ENCODE measurements at regions of chr19 and their contacts with region 1.

Region 1: DNA sequence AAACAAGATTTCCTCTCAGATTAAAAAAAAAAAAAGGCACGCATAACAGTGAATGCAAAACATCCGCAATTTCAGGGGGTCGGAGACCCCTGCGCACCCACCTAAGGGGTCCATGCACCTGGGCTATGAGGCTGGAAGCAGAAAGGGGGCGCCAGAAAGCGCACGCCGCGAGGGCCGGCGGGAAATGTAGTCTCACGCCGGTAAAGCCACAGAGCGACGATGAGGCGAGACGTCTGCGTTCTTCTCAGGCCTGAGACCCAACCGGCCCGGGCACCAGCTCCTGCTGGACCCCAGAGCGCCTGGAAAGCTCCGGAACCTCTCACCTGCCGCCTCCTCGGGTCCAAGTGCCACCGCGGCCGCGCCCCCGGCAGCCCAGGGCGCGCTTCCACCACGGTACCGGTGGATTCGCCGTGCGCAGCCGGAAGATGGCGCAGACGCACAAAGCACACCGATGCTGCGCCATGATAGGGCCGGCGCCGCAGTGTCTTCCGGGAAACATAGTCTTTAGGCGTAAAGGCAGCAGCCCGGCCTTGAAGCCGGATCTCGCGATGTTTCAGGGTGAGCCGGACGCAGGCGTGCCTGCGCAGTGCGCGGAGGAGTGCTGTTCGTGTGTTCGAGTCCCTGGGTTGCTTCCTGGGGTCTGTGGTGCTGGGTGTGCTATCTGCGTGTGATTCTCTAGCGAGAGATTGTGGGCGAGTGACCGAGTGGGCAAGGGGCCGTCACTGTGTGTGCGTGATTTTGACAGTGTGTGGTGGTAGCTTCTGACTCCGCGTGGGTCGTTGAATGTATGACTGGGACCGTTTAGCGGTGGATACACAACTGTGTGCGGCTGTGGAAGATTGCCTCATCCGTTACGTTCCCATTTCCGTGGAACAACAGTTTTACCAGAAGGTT is at the start of gene ZNF582:
- DNase-seq: peak; percentile 97 to 99 (median 98)
- ATAC-seq: peak; percentile 99 to 100 (median 99)
- H3K4me3 ChIP-seq: peak within 1 kb of the TSS; percentile 63 to 88 (median 74)
- H3K27ac ChIP-seq: peak within 1 kb of the TSS; percentile 76 to 99 (median 96)
- H3K4me1 ChIP-seq: peaks cover 0 to 19% (median 8%) of the 10 kb centered on the region in 12 donors
- H3K27me3 ChIP-seq: no peaks in the 10 kb centered on the region
- CTCF ChIP-seq: peak; percentile 68 to 97 (median 84)
- POLR2A ChIP-seq: peak in 1 of 2 donors; percentile 60
- total RNA-seq, gene ZNF582: 3.5 to 6.2 (median 4.7) TPM

Region 2: DNA sequence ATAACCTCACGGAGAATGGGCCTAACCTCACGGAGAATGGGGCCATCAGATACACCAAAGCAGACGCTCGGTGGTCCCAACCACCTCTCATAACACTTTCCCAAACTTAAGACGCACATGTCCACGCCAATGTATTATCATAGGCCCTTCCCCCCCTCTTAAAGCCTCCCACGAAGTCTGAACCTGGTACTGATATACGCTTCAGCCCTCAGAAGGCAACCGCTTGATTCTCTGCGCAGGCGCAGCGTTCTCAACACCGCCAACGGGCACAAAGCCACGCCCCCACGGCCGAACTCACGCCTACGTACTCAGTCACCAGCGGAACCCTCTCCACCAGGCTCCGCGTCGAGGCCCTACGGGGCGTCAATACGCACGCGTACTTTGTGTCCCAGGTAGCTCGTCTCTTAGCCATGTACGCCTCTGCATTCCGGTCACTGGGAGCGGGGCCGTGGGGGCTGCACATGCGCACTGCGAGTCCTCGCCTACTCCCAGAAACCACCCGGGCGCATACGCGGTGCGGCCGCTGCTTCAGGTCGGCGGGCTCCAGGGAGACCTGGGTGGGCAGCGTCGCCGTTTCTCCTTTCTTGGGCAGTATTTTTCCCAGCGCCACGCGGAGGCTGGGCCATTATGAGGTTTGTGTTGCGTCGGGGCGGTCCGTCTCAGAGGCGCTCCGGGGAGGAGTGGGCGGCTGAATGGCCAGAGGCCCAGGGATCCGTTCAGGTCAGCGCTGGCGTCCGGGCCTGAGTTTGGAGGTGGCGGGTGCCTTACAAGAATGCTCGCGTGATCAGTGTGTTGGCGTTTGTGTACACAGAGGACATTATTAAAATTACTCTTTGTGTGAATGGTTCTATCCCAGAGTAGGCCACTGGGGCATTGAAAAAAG is 25.3 kb before region 1 on chr19:
- intact Hi-C with region 1: loop called in 1 of 10 experiments (anchors 1 kb)
- DNase-seq: peak; percentile 93 to 98 (median 97)
- ATAC-seq: peak; percentile 98 to 100 (median 100)
- H3K4me3 ChIP-seq: peak overlapping the region; percentile 49 to 97 (median 74)
- H3K27ac ChIP-seq: peak overlapping the region; percentile 18 to 96 (median 90)
- H3K4me1 ChIP-seq: peaks cover 0 to 24% (median 20%) of the 10 kb centered on the region in 12 donors
- H3K27me3 ChIP-seq: no peaks in the 10 kb centered on the region
- CTCF ChIP-seq: peak in 2 of 12 donors; percentile 6 to 18
- POLR2A ChIP-seq: peak in 1 of 2 donors; percentile 75

Region 3: DNA sequence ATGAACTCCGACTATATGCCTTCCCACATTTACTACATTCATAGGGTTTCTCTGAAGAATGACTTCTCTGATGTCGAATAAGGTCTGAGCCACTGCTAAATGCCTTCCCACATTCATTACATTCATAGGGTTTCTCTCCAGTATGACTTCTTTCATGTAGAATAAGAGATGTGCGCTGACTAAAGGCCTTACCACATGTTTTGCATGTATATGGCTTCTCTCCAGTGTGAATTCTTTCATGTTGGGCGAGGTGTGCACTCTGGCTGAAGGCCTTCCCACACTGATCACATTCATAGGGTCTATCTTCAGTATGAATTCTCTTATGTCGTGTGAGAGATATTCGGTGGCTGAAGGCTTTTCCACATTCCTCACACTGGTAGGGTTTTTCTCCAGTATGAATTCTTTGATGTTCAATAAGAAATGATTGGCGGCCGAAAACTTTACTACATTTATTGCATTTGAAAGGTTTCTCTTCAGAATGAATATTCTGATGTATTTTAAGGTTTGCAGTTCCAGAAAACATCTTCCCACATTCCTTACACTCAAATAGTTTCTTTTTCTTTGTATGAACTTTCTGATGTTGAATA is 47.9 kb after region 1 on chr19:
- intact Hi-C with region 1: no loop called
- DNase-seq: no peak
- ATAC-seq: no peak
- H3K4me3 ChIP-seq: no peak overlapping the region
- H3K27ac ChIP-seq: no peak overlapping the region
- H3K4me1 ChIP-seq: no peaks in the 10 kb centered on the region
- H3K27me3 ChIP-seq: no peaks in the 10 kb centered on the region
- CTCF ChIP-seq: no peak
- POLR2A ChIP-seq: no peak

Region 4: GRCh38 chr19:56477429-56478338 is 84.3 kb after region 1 on chr19:
- intact Hi-C with region 1: loop called in 1 of 10 experiments (anchors 10 kb)
- DNase-seq: peak; percentile 93 to 97 (median 94)
- ATAC-seq: peak; percentile 96 to 98 (median 96)
- H3K4me3 ChIP-seq: peak overlapping the region; percentile 58 to 95 (median 80)
- H3K27ac ChIP-seq: peak overlapping the region; percentile 4 to 93 (median 84)
- H3K4me1 ChIP-seq: peaks cover 0 to 29% (median 14%) of the 10 kb centered on the region in 12 donors
- H3K27me3 ChIP-seq: no peaks in the 10 kb centered on the region
- CTCF ChIP-seq: no peak
- POLR2A ChIP-seq: peak in 1 of 2 donors; percentile 77

Region 5: GRCh38 chr19:56538254-56538760 is 144.9 kb after region 1 on chr19:
- intact Hi-C with region 1: loop called in 2 of 10 experiments (anchors 2 kb)
- DNase-seq: peak; percentile 93 to 96 (median 94)
- ATAC-seq: peak; percentile 98 to 99 (median 98)
- H3K4me3 ChIP-seq: peak overlapping the region; percentile 52 to 94 (median 82)
- H3K27ac ChIP-seq: peak overlapping the region; percentile 88 to 98 (median 96)
- H3K4me1 ChIP-seq: peaks cover 0 to 20% (median 10%) of the 10 kb centered on the region in 12 donors
- H3K27me3 ChIP-seq: no peaks in the 10 kb centered on the region
- CTCF ChIP-seq: no peak
- POLR2A ChIP-seq: peak in 1 of 2 donors; percentile 49

Region 6: DNA sequence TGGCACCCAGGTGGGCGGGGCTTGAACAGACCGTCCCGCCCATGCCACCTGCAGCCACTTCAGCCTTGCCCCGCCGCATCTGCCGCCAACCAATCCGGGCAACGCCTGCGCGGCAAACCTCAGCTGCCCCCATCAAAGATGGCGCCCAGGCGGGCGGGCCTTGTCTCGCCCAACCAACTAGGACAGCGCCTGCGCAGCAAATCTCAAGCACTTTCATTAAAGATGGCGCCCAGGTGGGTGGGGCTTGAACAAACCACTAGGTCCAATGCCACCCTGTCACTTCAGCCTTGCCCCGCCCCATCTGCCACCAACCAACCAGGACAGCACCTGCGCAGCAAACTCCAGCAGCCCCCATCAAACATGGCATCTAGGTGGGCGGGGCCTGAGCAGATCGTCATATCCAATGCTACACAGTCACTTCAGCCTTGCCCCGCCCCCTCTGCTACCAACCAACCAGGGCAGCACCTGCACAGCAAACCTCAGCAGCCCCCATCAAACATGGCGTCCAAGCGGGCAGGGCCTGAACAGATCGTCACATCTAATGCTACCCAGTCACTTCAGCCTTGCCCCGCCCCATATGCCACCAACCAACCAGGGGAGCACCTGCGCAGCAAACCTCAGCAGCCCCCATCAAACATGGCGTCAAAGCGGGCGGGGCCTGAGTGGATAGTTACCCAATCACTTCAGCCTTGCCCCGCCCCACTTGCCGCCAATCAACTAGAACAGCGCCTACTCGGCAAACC is 445.7 kb after region 1 on chr19:
- intact Hi-C with region 1: loop called in 1 of 10 experiments (anchors 5 kb)
- DNase-seq: peak; percentile 95 to 99 (median 97)
- ATAC-seq: peak; percentile 64 to 76 (median 68)
- H3K4me3 ChIP-seq: peak overlapping the region in 11 of 12 donors; percentile 38 to 76 (median 60)
- H3K27ac ChIP-seq: peak overlapping the region in 11 of 12 donors; percentile 52 to 94 (median 87)
- H3K4me1 ChIP-seq: peaks cover 0 to 14% (median 0%) of the 10 kb centered on the region in 12 donors
- H3K27me3 ChIP-seq: peaks cover 0 to 4% (median 0%) of the 10 kb centered on the region in 9 donors
- CTCF ChIP-seq: no peak
- POLR2A ChIP-seq: no peak